Activated CD4-positive, alpha-beta T cell treated with anti-CD3 and anti-CD28 coated beads for 36 hours (primary cell): ENCODE measurements at regions of chr19 and their contacts with region 1.

Region 1: DNA sequence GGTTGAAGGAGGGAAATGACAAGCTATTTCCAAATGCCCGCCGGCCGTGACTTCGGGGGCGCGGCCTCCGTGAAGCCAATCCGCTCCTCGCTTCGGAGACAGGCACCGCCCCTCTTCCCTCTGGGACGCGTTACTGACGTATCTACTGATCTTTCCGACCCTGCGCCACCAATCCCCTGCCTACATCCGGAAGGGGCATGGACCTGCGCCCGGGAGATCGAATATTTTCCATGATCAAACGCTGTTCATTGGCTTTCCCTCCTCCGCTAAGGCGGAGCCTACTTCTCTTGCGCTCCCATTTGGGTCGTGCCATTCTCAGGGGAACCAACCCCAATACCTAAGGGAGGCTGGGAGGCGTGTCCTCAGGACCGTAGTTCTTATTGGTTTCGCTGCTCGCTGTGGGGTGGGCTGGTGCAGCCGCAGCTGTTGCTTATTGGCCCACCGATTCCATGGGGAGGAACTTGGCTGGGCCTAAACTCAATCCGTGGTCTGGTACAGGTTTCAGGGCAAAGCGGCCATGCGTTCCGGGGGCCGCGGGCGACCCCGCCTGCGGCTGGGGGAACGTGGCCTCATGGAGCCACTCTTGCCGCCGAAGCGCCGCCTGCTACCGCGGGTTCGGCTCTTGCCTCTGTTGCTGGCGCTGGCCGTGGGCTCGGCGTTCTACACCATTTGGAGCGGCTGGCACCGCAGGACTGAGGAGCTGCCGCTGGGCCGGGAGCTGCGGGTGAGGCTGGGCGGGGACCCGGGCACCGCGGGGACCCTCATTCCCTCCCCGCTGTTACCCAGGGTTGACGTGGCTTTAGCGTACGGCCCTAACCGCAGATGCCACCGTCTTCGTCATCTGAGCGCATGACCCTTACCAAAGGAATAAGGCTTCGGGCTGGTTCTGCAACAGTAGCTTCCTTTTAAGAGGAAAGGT is at the start of gene QPCTL:
- DNase-seq: peak; percentile 99
- ATAC-seq: peak; percentile 92
- H3K4me3 Mint-ChIP-seq: peak within 1 kb of the TSS; percentile 89
- H3K27ac Mint-ChIP-seq: peak within 1 kb of the TSS; percentile 97
- H3K4me1 Mint-ChIP-seq: peaks cover 21% of the 10 kb centered on the region
- H3K27me3 Mint-ChIP-seq: no peaks in the 10 kb centered on the region
- total RNA-seq, gene QPCTL: 17.3 to 18.7 TPM

Region 2: GRCh38 chr19:45385392-45386221 is 306.8 kb before region 1 on chr19:
- CTCF ChIA-PET with region 1: no interaction called
- POLR2A ChIA-PET with region 1: no interaction called
- intact Hi-C with region 1: no loop called
- DNase-seq: no peak
- ATAC-seq: peak; percentile 53
- H3K4me3 Mint-ChIP-seq: no peak overlapping the region
- H3K27ac Mint-ChIP-seq: no peak overlapping the region
- H3K4me1 Mint-ChIP-seq: no peaks in the 10 kb centered on the region
- H3K27me3 Mint-ChIP-seq: peaks cover 14% of the 10 kb centered on the region

Region 3: DNA sequence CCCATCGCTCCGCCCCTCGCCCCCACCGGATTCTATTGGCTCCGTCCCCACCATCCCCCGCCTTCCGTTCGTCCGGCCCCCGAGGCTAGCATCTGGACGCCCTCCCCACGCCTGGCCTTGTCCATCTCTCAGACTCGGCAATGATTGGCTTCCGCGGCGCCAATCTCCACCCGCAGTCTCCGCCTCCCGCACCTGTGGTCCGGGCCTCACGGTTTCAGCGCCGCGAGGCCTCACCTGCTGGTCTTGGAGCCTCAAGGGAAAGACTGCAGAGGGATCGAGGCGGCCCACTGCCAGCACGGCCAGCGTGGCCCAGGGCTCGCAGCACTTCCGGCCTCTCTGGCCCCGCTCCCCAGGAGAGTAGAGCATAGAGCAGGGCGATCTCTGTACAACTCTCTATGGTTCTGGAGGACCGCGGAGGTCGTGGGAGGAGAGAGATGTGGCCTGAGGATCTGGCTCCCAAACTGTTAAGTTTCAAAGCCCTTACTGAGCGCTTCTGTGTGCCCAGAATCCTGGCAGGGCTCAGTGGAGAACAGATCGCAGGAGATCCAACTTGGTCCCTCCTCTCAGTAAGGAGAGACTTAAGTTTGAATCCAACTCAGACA is 268.8 kb before region 1 on chr19 and contains the start of gene ERCC1:
- CTCF ChIA-PET with region 1: no interaction called
- POLR2A ChIA-PET with region 1: no interaction called
- intact Hi-C with region 1: loop called (anchors 1 to 5 kb)
- DNase-seq: peak; percentile 84
- ATAC-seq: peak; percentile 78
- H3K4me3 Mint-ChIP-seq: peak within 1 kb of the TSS; percentile 92
- H3K27ac Mint-ChIP-seq: peak within 1 kb of the TSS; percentile 95
- H3K4me1 Mint-ChIP-seq: peaks cover 55% of the 10 kb centered on the region
- H3K27me3 Mint-ChIP-seq: peaks cover 2% of the 10 kb centered on the region
- total RNA-seq, gene ERCC1: 58.1 to 71.8 TPM

Region 4: GRCh38 chr19:45496349-45496953 is 196.0 kb before region 1 on chr19:
- CTCF ChIA-PET with region 1: interaction called, 5 read pairs
- POLR2A ChIA-PET with region 1: no interaction called
- intact Hi-C with region 1: loop called in 1 of 2 experiments (anchors 1 kb)
- DNase-seq: peak; percentile 74
- ATAC-seq: peak; percentile 1
- H3K4me3 Mint-ChIP-seq: peak overlapping the region; percentile 6
- H3K27ac Mint-ChIP-seq: no peak overlapping the region
- H3K4me1 Mint-ChIP-seq: peaks cover 43% of the 10 kb centered on the region
- H3K27me3 Mint-ChIP-seq: peaks cover 31% of the 10 kb centered on the region

Region 5: GRCh38 chr19:45601524-45602374 is 90.7 kb before region 1 on chr19 and contains the start of gene GPR4:
- CTCF ChIA-PET with region 1: no interaction called
- POLR2A ChIA-PET with region 1: no interaction called
- intact Hi-C with region 1: no loop called
- DNase-seq: no peak
- ATAC-seq: peak; percentile 30
- H3K4me3 Mint-ChIP-seq: no peak within 1 kb of the TSS
- H3K27ac Mint-ChIP-seq: no peak within 1 kb of the TSS
- H3K4me1 Mint-ChIP-seq: peaks cover 32% of the 10 kb centered on the region
- H3K27me3 Mint-ChIP-seq: peaks cover 59% of the 10 kb centered on the region
- total RNA-seq, gene GPR4: not detected

Region 6: GRCh38 chr19:45670670-45671453 is 21.6 kb before region 1 on chr19:
- CTCF ChIA-PET with region 1: interaction called, 11 read pairs
- POLR2A ChIA-PET with region 1: interaction called, 3 read pairs
- intact Hi-C with region 1: loop called in 1 of 2 experiments (anchors 1 kb)
- DNase-seq: peak; percentile 89
- ATAC-seq: peak; percentile 39
- H3K4me3 Mint-ChIP-seq: peak overlapping the region; percentile 18
- H3K27ac Mint-ChIP-seq: no peak overlapping the region
- H3K4me1 Mint-ChIP-seq: peaks cover 24% of the 10 kb centered on the region
- H3K27me3 Mint-ChIP-seq: peaks cover 18% of the 10 kb centered on the region

Region 7: GRCh38 chr19:45770192-45771101 is 78.0 kb after region 1 on chr19:
- CTCF ChIA-PET with region 1: interaction called, 9 read pairs
- POLR2A ChIA-PET with region 1: interaction called, 8 read pairs
- intact Hi-C with region 1: loop called in 1 of 2 experiments (anchors 1 kb)
- DNase-seq: peak; percentile 93
- ATAC-seq: peak; percentile 68
- H3K4me3 Mint-ChIP-seq: peak overlapping the region; percentile 78
- H3K27ac Mint-ChIP-seq: no peak overlapping the region
- H3K4me1 Mint-ChIP-seq: peaks cover 10% of the 10 kb centered on the region
- H3K27me3 Mint-ChIP-seq: peaks cover 10% of the 10 kb centered on the region

Region 8: DNA sequence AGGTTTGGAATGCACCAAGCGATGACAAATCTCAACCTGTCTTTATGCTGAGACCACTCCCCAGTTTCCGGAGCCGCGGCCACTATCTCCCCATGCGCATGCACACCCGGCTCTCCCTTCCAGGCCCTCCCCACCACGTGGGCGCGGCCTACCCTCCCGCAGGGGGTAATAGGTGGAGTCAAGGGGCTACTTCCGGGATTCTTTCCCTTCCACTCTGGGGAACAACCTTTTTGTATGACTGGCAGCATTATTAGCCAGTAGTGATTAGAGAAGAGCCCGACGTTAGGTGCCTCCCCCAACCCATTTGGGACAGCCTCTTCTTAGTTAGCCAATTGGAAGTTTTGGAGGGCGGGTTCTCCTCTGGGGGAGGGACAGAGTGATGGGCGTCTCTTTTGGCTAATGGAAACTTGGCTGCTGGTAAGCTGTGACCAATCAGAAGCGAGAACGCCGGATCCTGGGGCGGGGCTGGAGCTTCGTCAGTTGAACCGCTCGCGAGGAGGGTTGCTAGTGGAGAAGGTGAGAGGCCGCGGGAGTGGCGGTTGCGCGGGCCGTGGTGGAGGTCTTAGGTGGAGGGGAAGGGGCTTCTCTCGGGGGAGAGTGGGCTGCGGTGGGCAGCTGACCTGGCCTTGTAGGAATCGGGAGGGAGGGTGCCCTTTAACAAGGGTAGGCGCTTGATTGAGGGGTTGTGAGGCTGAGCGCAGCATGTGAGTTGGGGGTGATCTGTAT is 302.7 kb after region 1 on chr19 and contains the start of gene CCDC61:
- CTCF ChIA-PET with region 1: no interaction called
- POLR2A ChIA-PET with region 1: no interaction called
- intact Hi-C with region 1: loop called in 1 of 2 experiments (anchors 1 kb)
- DNase-seq: peak; percentile 96
- ATAC-seq: peak; percentile 98
- H3K4me3 Mint-ChIP-seq: no peak within 1 kb of the TSS
- H3K27ac Mint-ChIP-seq: no peak within 1 kb of the TSS
- H3K4me1 Mint-ChIP-seq: peaks cover 22% of the 10 kb centered on the region
- H3K27me3 Mint-ChIP-seq: peaks cover 7% of the 10 kb centered on the region
- total RNA-seq, gene CCDC61: 22.4 to 26.2 TPM